AG04449 (cell line): ENCODE measurements at regions of chr2 and their contacts with region 1.

Region 1: GRCh38 chr2:27102329-27102728 is 15.8 kb downstream of the KHK start:
- DNase-seq: no peak
- H3K4me3 ChIP-seq: no peak overlapping the region
- CTCF ChIP-seq: no peak

Region 2: DNA sequence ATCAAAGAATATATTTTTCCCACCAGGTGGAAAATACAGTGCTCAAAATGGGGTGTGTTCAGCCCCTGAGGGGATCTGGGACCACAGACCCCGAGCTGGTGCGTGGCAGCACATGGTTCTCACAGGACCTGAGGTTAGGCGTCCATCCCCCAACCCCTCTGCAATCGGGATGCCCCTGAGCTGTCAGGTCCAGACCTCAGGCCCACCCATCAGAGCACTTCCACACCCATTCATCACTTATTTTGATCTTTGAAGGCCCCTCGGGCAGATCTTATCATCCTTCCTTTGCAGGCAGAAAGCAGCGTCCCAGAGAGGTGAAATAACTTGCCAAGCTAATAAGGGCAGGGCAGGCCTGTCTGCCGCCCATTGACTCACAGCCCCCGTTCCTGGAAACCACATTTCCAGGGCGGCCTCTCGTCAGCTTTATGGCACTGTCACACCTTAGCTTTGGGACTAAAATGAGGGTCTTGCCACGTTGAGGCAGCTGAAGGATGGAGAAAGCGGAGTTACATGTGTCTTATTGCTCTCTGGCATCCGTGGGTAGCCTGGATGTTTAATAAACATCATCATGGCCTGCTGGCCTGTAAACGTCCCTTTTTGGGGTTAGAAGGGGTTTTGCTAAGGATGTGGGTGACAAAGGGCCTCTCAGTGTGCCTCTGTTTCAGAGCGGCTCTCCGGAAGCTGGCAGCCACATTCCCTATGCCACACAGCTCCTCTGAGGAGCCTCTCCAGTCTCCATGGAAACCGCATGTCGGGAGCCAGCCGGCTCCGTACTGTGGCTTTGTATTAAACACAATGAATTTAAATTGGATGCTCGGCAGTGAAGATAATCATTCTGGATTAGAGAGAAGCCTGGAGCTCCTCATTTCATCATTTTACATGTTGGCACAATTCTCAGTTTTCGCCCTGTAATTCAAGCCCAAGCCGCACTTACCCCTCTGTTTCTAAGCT is 190.1 kb before region 1 on chr2:
- CTCF ChIA-PET with region 1: no interaction called
- POLR2A ChIA-PET with region 1: no interaction called
- DNase-seq: no peak
- H3K4me3 ChIP-seq: no peak overlapping the region
- CTCF ChIP-seq: no peak

Region 3: GRCh38 chr2:27117995-27118524 is 15.7 kb after region 1 on chr2:
- CTCF ChIA-PET with region 1: interaction called, 34 read pairs
- POLR2A ChIA-PET with region 1: no interaction called
- DNase-seq: no peak
- H3K4me3 ChIP-seq: peak overlapping the region; percentile 59
- CTCF ChIP-seq: no peak